ENCODE measurements at regions of chr15 and their contacts with region 1.

Region 1: GRCh38 chr15:31552482-31553099 is 226.0 kb downstream of the KLF13 start:
- DNase-seq: no peak
- ATAC-seq: no peak
- H3K4me3 ChIP-seq: no peak overlapping the region
- H3K4me3 Mint-ChIP-seq: no peak overlapping the region
- H3K27ac ChIP-seq: no peak overlapping the region
- H3K27ac Mint-ChIP-seq: no peak overlapping the region
- H3K4me1 ChIP-seq: no peaks in the 10 kb centered on the region
- H3K4me1 Mint-ChIP-seq: no peaks in the 10 kb centered on the region
- H3K27me3 ChIP-seq: peaks cover 0 to 11% of the 10 kb centered on the region in 2 experiments
- H3K27me3 Mint-ChIP-seq: peaks cover 8 to 12% of the 10 kb centered on the region in 2 donors

Region 2: GRCh38 chr15:31526916-31527690 is 25.5 kb before region 1 on chr15:
- CTCF ChIA-PET with region 1: no interaction called
- POLR2A ChIA-PET with region 1: no interaction called
- DNase-seq: no peak
- ATAC-seq: no peak
- H3K4me3 ChIP-seq: no peak overlapping the region
- H3K4me3 Mint-ChIP-seq: no peak overlapping the region
- H3K27ac ChIP-seq: no peak overlapping the region
- H3K27ac Mint-ChIP-seq: no peak overlapping the region
- H3K4me1 ChIP-seq: no peaks in the 10 kb centered on the region
- H3K4me1 Mint-ChIP-seq: no peaks in the 10 kb centered on the region
- H3K27me3 ChIP-seq: peaks cover 0 to 38% of the 10 kb centered on the region in 2 experiments
- H3K27me3 Mint-ChIP-seq: peaks cover 12 to 28% of the 10 kb centered on the region in 2 donors

Region 3: GRCh38 chr15:31571671-31572070 is 19.1 kb after region 1 on chr15:
- CTCF ChIA-PET with region 1: no interaction called
- POLR2A ChIA-PET with region 1: no interaction called
- DNase-seq: no peak
- ATAC-seq: no peak
- H3K4me3 ChIP-seq: no peak overlapping the region
- H3K4me3 Mint-ChIP-seq: no peak overlapping the region
- H3K27ac ChIP-seq: no peak overlapping the region
- H3K27ac Mint-ChIP-seq: no peak overlapping the region
- H3K4me1 ChIP-seq: no peaks in the 10 kb centered on the region
- H3K4me1 Mint-ChIP-seq: no peaks in the 10 kb centered on the region
- H3K27me3 ChIP-seq: no peaks in the 10 kb centered on the region
- H3K27me3 Mint-ChIP-seq: no peaks in the 10 kb centered on the region

Region 4: GRCh38 chr15:31758126-31758525 is 205.5 kb after region 1 on chr15:
- CTCF ChIA-PET with region 1: no interaction called
- POLR2A ChIA-PET with region 1: no interaction called
- DNase-seq: no peak
- ATAC-seq: no peak
- H3K4me3 ChIP-seq: no peak overlapping the region
- H3K4me3 Mint-ChIP-seq: no peak overlapping the region
- H3K27ac ChIP-seq: no peak overlapping the region
- H3K27ac Mint-ChIP-seq: no peak overlapping the region
- H3K4me1 ChIP-seq: no peaks in the 10 kb centered on the region
- H3K4me1 Mint-ChIP-seq: no peaks in the 10 kb centered on the region
- H3K27me3 ChIP-seq: peaks cover 0 to 12% of the 10 kb centered on the region in 2 experiments
- H3K27me3 Mint-ChIP-seq: peaks cover 14 to 53% of the 10 kb centered on the region in 2 donors

Region 5: GRCh38 chr15:33155691-33156425 is 1603.3 kb after region 1 on chr15:
- CTCF ChIA-PET with region 1: interaction called in 1 of 2 experiments, 14 read pairs
- POLR2A ChIA-PET with region 1: no interaction called
- DNase-seq: no peak
- ATAC-seq: no peak
- H3K4me3 ChIP-seq: no peak overlapping the region
- H3K4me3 Mint-ChIP-seq: no peak overlapping the region
- H3K27ac ChIP-seq: no peak overlapping the region
- H3K27ac Mint-ChIP-seq: no peak overlapping the region
- H3K4me1 ChIP-seq: peaks cover 0 to 3% of the 10 kb centered on the region in 2 experiments
- H3K4me1 Mint-ChIP-seq: peaks cover 22 to 42% (median 25%) of the 10 kb centered on the region in 3 donors
- H3K27me3 ChIP-seq: peaks cover 0 to 5% of the 10 kb centered on the region in 2 experiments
- H3K27me3 Mint-ChIP-seq: peaks cover 0 to 2% of the 10 kb centered on the region in 2 donors